Psoas muscle (tissue), 8 donors: ENCODE measurements at regions of chr14 and their contacts with region 1.

Region 1: GRCh38 chr14:65604936-65605335 is 192.4 kb downstream of the FUT8 start:
- DNase-seq: no peak
- ATAC-seq: no peak
- H3K4me3 ChIP-seq: no peak overlapping the region
- H3K27ac ChIP-seq: no peak overlapping the region
- H3K4me1 ChIP-seq: no peaks in the 10 kb centered on the region
- H3K27me3 ChIP-seq: no peaks in the 10 kb centered on the region
- CTCF ChIP-seq: peak; percentile 20

Region 2: DNA sequence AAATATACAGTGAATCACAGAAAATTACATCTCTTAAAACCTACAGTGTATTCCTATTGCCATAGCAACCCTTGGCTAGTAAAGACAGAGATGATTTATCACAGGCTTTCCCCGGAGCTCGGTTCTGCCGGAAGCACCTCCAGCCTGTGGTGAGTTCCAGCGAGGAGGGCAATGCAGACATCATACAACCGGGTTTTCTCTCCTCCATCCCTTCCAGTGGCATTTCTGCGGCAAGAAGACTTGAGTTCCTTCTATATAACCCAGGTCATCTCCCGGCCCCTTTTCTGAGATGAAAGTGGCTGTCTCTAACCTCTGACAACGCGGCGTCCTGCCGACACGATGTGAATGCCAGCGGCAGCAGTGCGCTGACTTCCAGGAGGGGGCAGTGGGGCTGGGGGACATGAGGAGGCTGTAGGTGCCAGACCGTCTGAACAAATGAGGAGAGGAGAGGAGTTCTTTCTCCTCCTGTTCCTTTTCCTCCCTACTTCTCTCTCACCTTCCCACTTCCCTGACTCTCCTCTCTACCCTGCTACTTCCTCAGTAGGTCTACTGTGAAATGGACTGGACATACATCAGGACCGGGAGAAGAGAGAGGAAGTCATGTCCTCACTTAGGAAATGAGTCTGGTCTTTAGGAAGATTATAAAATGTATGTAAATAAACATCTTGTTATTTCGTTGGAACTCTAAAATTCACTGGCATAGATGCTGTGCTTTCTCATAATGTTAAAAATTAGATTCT is 434.0 kb before region 1 on chr14:
- intact Hi-C with region 1: no loop called
- DNase-seq: peak in 1 of 2 donors; percentile 19
- ATAC-seq: peak in 2 of 4 donors; percentile 35 to 56
- H3K4me3 ChIP-seq: peak overlapping the region; percentile 36
- H3K27ac ChIP-seq: no peak overlapping the region
- H3K4me1 ChIP-seq: no peaks in the 10 kb centered on the region
- H3K27me3 ChIP-seq: peaks cover 0 to 20% (median 3%) of the 10 kb centered on the region in 3 donors
- CTCF ChIP-seq: no peak

Region 3: GRCh38 chr14:65412032-65412846 is 192.7 kb before region 1 on chr14 and contains the start of gene FUT8:
- intact Hi-C with region 1: loop called in 1 of 2 experiments (anchors 5 kb)
- DNase-seq: peak; percentile 97 to 99
- ATAC-seq: peak; percentile 93 to 96 (median 94)
- H3K4me3 ChIP-seq: peak within 1 kb of the TSS; percentile 80
- H3K27ac ChIP-seq: peak within 1 kb of the TSS; percentile 81
- H3K4me1 ChIP-seq: peaks cover 5% of the 10 kb centered on the region
- H3K27me3 ChIP-seq: no peaks in the 10 kb centered on the region
- CTCF ChIP-seq: peak; percentile 63
- total RNA-seq, gene FUT8: 4.1 to 8.6 (median 6.7) TPM